ENCODE measurements at regions of chr4 and their contacts with region 1.

Region 1: GRCh38 chr4:53962516-53963225 is 101.7 kb downstream of the CHIC2 start:
- DNase-seq: peak in 1 of 2 experiments; percentile 20
- H3K4me3 ChIP-seq: no peak overlapping the region
- H3K4me3 Mint-ChIP-seq: no peak overlapping the region
- H3K27ac Mint-ChIP-seq: no peak overlapping the region
- H3K4me1 ChIP-seq: peaks cover 16% of the 10 kb centered on the region
- H3K4me1 Mint-ChIP-seq: peaks cover 12% of the 10 kb centered on the region
- H3K27me3 ChIP-seq: no peaks in the 10 kb centered on the region
- H3K27me3 Mint-ChIP-seq: no peaks in the 10 kb centered on the region
- CTCF ChIP-seq: no peak

Region 2: DNA sequence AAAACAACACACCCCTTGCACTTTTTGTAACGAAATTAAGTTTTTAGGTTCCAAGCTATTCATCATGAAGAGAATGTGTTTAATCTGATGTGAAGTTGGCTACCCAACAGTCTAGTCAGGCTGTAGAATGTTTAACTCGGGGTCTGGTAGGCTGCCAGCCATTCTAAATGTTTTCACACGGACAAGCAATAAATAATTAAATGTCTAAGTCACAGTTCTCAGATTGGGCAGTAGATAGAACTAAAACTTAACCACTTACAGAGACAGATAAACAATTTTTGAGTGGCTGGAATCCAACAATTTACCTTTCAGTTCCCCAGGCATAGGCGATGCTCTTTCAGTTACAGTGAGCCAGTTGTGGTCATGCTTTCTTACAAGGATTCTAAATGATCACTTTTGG is 35.2 kb after region 1 on chr4:
- CTCF ChIA-PET with region 1: no interaction called
- POLR2A ChIA-PET with region 1: no interaction called
- intact Hi-C with region 1: loop called (anchors 5 kb)
- DNase-seq: no peak
- H3K4me3 ChIP-seq: no peak overlapping the region
- H3K4me3 Mint-ChIP-seq: no peak overlapping the region
- H3K27ac Mint-ChIP-seq: no peak overlapping the region
- H3K4me1 ChIP-seq: peaks cover 7% of the 10 kb centered on the region
- H3K4me1 Mint-ChIP-seq: no peaks in the 10 kb centered on the region
- H3K27me3 ChIP-seq: no peaks in the 10 kb centered on the region
- H3K27me3 Mint-ChIP-seq: no peaks in the 10 kb centered on the region
- CTCF ChIP-seq: no peak

Region 3: GRCh38 chr4:54099748-54100574 is 137.3 kb after region 1 on chr4 and contains the start of gene GSX2:
- CTCF ChIA-PET with region 1: no interaction called
- POLR2A ChIA-PET with region 1: no interaction called
- intact Hi-C with region 1: no loop called
- DNase-seq: peak in 1 of 2 experiments; percentile 21
- H3K4me3 ChIP-seq: peak within 1 kb of the TSS; percentile 36
- H3K4me3 Mint-ChIP-seq: peak within 1 kb of the TSS; percentile 78
- H3K27ac Mint-ChIP-seq: no peak within 1 kb of the TSS
- H3K4me1 ChIP-seq: peaks cover 5% of the 10 kb centered on the region; the same call in 1 of the 2 replicates
- H3K4me1 Mint-ChIP-seq: no peaks in the 10 kb centered on the region
- H3K27me3 ChIP-seq: no peaks in the 10 kb centered on the region
- H3K27me3 Mint-ChIP-seq: peaks cover 13% of the 10 kb centered on the region
- CTCF ChIP-seq: no peak
- total RNA-seq, gene GSX2: not detected in 2 replicates

Measured in Caco-2 (cell line).